ENCODE measurements at regions of chr17 and their contacts with region 1.

Region 1: DNA sequence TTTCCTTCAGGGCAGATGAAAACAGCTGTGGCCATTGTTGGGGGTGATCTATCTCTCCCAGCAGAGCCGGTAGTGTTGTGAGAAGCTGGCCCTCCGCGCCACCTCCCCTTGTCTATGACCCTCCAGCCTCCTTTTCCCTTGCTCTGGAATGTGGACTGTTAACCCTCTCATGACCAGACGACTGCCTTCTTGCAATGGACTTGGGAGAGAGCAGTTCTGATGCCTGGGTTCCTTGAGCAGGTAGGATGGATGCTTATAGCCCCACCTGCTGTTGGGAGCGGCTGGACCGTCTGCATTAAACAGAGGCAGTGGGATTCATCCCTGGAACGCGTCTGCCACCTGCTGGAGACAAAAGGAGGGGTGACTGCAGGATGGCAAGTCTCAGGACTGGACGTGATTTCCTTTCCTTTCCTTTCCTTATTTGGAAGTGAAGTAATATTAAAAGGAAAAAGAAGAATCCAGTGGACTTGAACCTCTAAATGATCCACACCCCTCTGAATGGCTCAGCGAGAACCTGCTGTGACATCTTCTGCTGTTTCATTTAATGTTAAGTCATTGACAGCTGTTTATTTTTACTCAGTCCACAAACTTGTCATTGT is 1.8 kb upstream of the SOST start:
- DNase-seq: peak; percentile 86
- H3K4me3 ChIP-seq: no peak overlapping the region
- H3K27ac ChIP-seq: no peak overlapping the region
- H3K27me3 ChIP-seq: peaks cover 29% of the 10 kb centered on the region
- CTCF ChIP-seq: peak; percentile 100

Region 2: DNA sequence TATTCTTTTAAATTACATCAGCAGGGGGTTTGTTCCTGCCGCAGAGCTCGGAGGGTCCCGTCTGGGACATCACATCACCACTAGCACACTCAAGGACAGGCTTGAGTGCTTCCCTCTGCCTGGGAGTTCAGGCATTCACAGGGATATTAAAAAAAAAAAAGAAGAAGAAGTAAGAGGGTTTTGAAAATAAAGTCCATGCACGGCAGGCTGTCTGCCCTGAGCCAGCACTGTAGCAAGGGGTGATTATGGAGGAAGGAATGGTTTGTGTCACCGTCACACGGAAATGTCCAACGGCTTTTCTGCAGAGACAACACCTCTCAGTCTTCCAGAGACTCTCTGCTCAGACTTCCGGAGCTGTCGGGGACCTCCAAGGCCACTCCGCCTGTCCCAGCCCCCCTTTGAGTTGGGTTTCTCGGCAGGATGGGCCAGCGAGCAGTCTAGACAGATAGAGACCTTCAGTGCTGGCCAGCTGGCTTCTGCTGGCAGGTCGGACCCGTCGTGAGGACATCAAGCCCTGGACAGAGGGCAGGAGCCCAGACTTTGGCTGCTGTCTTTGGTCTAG is 132.2 kb before region 1 on chr17:
- CTCF ChIA-PET with region 1: no interaction called
- POLR2A ChIA-PET with region 1: no interaction called
- DNase-seq: no peak
- H3K4me3 ChIP-seq: no peak overlapping the region
- H3K27ac ChIP-seq: no peak overlapping the region
- H3K27me3 ChIP-seq: no peaks in the 10 kb centered on the region
- CTCF ChIP-seq: 0 out of 2 replicates have a peak, but pooled peaks have one; percentile 6

Region 3: DNA sequence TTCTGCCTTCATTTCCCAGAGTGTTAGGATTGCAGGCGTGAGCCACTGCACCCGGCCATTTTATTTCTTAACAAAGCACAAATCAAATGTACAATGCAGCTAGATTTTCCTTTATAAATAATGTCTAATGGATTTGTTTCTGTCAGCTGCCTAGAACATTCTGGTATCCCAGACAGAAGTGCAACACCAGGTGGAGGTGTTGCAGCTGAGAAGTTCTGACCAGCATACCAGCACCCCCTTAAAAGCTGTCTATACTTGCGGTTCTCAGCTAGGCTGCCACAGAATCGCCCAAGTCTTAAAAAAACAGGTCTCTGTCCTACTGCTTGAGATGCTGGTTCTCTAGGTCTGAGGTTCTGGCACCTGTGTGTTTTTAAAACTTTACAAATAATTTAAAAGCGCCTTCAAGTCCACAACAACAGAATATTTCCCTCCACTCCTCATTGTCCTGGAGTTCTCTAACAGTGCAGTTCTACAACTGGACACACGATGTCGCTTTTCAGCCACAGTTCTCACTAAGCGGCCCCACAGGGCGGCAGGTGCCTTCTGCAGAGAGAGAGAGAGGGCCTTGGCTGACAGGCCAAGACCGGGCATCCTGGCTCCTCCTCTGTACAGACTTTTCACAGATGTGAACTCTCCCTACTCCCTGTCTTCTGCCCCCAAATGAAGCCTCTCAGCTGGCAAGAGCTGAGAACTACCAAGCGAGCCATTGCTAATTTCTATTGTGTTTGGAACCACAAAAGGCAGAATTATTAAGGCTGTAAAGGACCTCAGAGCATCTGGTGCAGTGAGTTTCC is 66.1 kb before region 1 on chr17:
- CTCF ChIA-PET with region 1: interaction called, 515 read pairs
- POLR2A ChIA-PET with region 1: interaction called, 4 read pairs
- DNase-seq: peak; percentile 55
- H3K4me3 ChIP-seq: no peak overlapping the region
- H3K27ac ChIP-seq: no peak overlapping the region
- H3K27me3 ChIP-seq: peaks cover 12% of the 10 kb centered on the region
- CTCF ChIP-seq: peak; percentile 92

Region 4: DNA sequence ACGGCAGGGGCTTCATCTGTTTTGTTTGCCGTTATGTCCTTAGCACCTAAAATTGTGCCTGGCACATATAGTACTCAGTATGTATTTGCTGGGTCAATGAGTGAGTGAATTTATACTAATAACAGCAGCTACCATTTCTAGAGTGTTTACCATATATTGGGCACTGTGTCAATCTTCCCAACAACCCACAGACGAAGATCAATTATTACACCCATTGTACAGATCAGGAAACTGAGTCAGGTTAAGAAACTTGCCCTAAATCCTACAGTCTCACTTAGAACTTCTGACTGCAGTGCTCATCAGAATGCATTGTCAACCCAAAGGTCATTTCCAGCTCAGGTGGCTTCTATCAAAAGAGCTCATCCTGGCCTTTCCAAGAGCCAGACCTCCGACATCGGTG is 54.1 kb before region 1 on chr17:
- CTCF ChIA-PET with region 1: interaction called, 515 read pairs
- POLR2A ChIA-PET with region 1: no interaction called
- DNase-seq: no peak
- H3K4me3 ChIP-seq: no peak overlapping the region
- H3K27ac ChIP-seq: no peak overlapping the region
- H3K27me3 ChIP-seq: peaks cover 10% of the 10 kb centered on the region
- CTCF ChIP-seq: no peak

Region 5: GRCh38 chr17:43832976-43833829 is 72.8 kb after region 1 on chr17 and contains the start of gene MPP3:
- CTCF ChIA-PET with region 1: no interaction called
- POLR2A ChIA-PET with region 1: no interaction called
- DNase-seq: no peak
- H3K4me3 ChIP-seq: peak within 1 kb of the TSS; percentile 70
- H3K27ac ChIP-seq: peak within 1 kb of the TSS; percentile 21
- H3K27me3 ChIP-seq: peaks cover 2% of the 10 kb centered on the region
- CTCF ChIP-seq: no peak
- polyA plus RNA-seq, gene MPP3: 4.5 and 4.7 TPM in 2 replicates

Measured in AG04450 (cell line).